SK-MEL-5 (cell line): ENCODE measurements at regions of chr11 and their contacts with region 1.

Region 1: GRCh38 chr11:34997952-34998528 is 81.6 kb downstream of the PDHX start:
- DNase-seq: peak; percentile 49

Region 2: GRCh38 chr11:35391922-35392813 is 394.1 kb after region 1 on chr11:
- in situ Hi-C with region 1: loop called (anchors 25 kb)
- DNase-seq: peak; percentile 86